Ovary (tissue), 10 donors: ENCODE measurements at regions of chr2 and their contacts with region 1.

Region 1: GRCh38 chr2:120740765-120741524 is 5.3 kb downstream of the GLI2 start:
- DNase-seq: peak in 3 of 5 donors; percentile 39 to 55 (median 52)
- H3K4me3 ChIP-seq: peak overlapping the region; percentile 30
- H3K27ac ChIP-seq: no peak overlapping the region
- H3K4me1 ChIP-seq: peaks cover 22% of the 10 kb centered on the region
- H3K27me3 ChIP-seq: no peaks in the 10 kb centered on the region
- CTCF ChIP-seq: no peak
- EP300 ChIP-seq: no peak
- POLR2A ChIP-seq: no peak

Region 2: DNA sequence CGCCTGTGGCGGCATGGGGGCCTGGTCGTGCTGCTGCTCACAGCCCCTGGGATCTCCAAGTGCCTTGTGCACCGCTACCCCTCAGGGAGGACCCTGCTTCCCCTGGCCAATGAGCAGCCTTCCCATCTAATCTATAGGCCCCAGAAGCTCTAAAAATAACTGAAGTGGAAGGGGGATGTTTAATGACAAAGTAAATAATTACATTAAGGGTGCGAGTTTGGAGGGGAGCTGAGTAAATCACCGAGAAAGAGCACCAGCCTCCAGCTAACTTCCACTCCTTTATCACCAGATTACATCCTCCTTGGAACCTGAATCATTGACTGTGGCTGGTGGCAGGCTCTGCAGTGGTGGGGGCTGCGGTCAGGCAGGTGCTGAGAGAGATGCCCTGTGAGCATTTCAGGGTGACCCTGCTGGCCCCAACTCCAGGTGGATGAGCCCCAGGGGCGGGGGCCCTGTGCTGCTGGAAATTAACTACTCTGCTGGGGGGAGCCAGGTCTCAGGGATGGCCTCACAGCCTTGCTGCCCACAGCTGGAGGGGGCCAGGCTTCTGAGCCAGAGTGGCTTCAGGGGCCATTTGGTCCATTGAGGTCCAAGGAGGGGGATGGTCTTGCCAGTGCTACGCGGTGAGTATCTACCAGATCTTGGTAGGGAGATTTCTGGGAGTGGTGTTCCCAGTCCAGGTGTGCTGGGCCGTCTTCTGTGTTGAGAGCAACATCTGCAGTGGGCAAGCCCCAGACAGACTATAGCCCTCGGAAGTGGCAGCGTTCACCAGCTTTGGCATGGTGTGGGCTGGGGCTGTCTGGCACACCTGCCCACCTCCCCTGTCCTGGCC is 68.9 kb after region 1 on chr2:
- intact Hi-C with region 1: no loop called
- DNase-seq: no peak
- H3K4me3 ChIP-seq: no peak overlapping the region
- H3K27ac ChIP-seq: no peak overlapping the region
- H3K4me1 ChIP-seq: peaks cover 7% of the 10 kb centered on the region
- H3K27me3 ChIP-seq: no peaks in the 10 kb centered on the region
- CTCF ChIP-seq: no peak
- EP300 ChIP-seq: no peak
- POLR2A ChIP-seq: no peak

Region 3: GRCh38 chr2:120825370-120826259 is 84.7 kb after region 1 on chr2:
- intact Hi-C with region 1: loop called in 2 of 4 experiments (anchors 10 kb)
- DNase-seq: peak; percentile 47 to 74 (median 65)
- H3K4me3 ChIP-seq: no peak overlapping the region
- H3K27ac ChIP-seq: no peak overlapping the region
- H3K4me1 ChIP-seq: peaks cover 41% of the 10 kb centered on the region
- H3K27me3 ChIP-seq: no peaks in the 10 kb centered on the region
- CTCF ChIP-seq: no peak
- EP300 ChIP-seq: no peak
- POLR2A ChIP-seq: no peak

Region 4: DNA sequence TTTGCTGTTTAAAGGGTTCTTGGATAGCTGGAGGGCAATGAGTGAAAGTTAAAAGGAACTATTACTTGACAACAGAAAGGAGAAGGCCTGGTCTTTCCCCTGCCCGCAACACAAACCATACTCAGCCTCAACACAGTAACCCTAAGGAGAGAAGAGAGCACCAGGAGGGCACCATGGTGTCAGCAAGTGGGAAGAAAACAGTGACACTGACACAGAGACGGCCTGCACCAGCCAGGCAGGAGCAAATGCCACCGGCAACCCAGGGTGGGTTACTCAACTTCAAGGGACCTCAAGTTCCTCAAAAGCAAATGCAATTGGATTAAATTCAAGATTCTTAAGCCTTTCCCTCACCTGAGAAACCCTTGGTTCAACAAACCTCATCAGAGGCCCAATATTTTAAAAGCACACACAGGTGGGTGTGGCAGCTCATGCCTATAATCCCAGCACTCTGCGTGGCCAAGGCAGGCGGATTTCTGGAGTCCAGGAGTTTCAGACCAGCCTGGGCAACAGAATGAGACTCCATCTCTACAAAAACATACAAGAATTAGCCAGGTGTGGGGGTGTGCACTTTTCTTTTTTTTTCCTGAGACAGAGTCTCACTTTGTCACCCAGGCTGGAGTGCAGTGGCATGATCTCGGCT is 491.8 kb after region 1 on chr2:
- intact Hi-C with region 1: no loop called
- DNase-seq: no peak
- H3K4me3 ChIP-seq: no peak overlapping the region
- H3K27ac ChIP-seq: no peak overlapping the region
- H3K4me1 ChIP-seq: no peaks in the 10 kb centered on the region
- H3K27me3 ChIP-seq: no peaks in the 10 kb centered on the region
- CTCF ChIP-seq: no peak
- EP300 ChIP-seq: no peak
- POLR2A ChIP-seq: no peak

Region 5: DNA sequence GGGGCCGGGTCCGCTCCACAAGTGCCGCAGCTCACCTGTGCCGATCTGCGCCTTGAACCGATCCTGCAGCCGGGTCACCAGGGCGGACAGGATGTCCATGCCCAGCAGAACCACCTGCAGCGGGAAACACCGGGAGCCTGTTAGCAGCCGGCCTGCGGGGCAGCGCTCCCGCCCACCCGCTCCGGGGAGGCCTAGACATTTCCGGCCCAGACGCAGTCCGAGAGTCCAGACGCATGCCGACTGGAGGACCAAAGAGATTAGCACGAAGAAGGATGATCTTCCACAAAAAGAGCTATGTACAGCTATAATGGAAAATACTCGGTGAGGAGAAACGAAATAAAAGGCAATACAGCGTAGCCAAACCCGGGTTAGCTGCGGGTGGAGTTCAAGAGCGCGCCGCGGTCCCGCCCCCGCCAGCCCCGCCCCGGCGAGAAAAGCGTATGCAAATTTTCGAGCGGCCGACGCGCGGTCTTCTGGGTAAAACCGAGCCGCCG is 789.3 kb after region 1 on chr2:
- intact Hi-C with region 1: no loop called
- DNase-seq: peak; percentile 79 to 90 (median 84)
- H3K4me3 ChIP-seq: peak overlapping the region; percentile 54
- H3K27ac ChIP-seq: peak overlapping the region; percentile 76 to 97
- H3K4me1 ChIP-seq: peaks cover 3% of the 10 kb centered on the region
- H3K27me3 ChIP-seq: no peaks in the 10 kb centered on the region
- CTCF ChIP-seq: no peak
- EP300 ChIP-seq: no peak
- POLR2A ChIP-seq: no peak